Sigmoid colon (tissue), 7 donors: ENCODE measurements at regions of chr2 and their contacts with region 1.

Region 1: DNA sequence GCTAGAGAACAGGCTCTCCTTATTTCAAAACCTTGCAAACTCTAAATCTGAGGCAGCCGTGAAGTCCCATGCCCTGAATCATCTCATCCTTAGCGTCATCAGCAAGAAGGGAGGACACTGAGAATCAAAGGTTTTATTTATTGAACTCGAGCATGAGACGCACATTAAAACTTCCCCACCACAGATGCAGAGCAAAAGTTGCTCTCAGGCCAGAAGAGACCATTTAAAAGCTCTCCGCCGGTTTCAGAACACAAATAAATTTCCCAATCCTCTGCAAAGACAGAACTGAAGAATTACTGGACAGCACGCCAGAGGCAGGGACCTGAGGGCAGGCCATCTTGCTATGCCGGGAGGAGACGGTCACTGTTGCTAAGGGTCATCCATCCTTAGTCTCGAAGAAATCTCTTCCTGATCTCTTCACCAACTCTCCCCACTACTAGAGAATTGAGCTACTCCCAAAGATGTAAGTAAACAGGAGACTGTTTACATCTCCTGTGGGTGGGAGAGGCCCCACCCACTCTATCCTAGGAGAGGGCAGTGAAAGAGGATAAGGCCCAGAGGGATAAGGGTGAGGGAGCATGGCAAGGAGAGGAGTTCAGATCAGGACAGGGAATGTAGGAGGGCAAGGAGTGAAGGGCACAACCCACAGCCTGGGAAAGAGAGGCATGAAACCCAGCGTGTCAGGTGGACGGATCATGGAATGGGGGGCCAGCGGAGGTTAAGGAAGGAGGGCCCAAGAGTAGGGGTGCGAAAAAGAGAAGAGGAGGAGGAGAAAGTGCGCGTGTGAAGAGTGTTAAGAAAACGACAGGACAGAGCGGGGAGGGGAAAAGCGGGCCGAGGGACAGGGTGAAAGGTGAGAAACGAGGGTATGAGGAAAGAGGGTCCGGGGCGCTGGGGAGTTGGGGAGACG is 1.1 kb downstream of the AMMECR1L start:
- DNase-seq: no peak
- H3K4me3 ChIP-seq: peak overlapping the region; percentile 44 to 63 (median 60)
- H3K27ac ChIP-seq: peak overlapping the region; percentile 87 to 92 (median 90)
- H3K4me1 ChIP-seq: peaks cover 0 to 69% (median 46%) of the 10 kb centered on the region in 4 donors
- H3K27me3 ChIP-seq: no peaks in the 10 kb centered on the region
- CTCF ChIP-seq: no peak
- EP300 ChIP-seq: no peak
- POLR2A ChIP-seq: no peak

Region 2: DNA sequence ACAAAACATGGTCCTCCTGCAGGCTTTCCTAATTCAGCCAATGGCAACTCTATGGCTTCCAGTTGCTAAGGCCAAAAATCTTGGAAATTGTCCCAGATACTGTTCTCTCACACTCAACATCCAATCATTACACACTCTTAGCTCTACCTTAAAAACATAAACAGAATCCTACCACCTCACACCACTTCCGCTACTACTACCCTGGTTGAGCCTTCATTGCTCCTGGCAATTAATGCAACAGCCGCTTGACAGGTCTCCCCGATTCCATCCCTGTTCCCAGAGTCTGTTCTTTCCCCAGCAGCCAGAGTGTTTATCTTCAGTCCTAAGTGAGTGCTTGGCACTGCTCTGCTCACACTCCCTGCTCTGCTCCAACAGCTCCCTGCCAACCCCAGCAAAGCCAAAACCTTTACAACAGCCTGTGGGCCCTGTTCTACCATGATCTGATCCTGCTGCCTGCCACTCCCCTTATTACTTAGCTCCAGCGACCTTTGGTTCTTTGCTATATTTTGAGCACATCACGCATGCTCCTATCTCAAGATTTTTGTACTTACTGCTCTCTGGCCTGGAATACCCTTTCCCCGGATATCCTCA is 68.5 kb after region 1 on chr2:
- intact Hi-C with region 1: loop called (anchors 5 kb)
- DNase-seq: peak; percentile 83
- H3K4me3 ChIP-seq: no peak overlapping the region
- H3K27ac ChIP-seq: peak overlapping the region; percentile 60 to 75 (median 72)
- H3K4me1 ChIP-seq: peaks cover 4 to 32% (median 20%) of the 10 kb centered on the region in 4 donors
- H3K27me3 ChIP-seq: no peaks in the 10 kb centered on the region
- CTCF ChIP-seq: no peak
- EP300 ChIP-seq: no peak
- POLR2A ChIP-seq: no peak

Region 3: DNA sequence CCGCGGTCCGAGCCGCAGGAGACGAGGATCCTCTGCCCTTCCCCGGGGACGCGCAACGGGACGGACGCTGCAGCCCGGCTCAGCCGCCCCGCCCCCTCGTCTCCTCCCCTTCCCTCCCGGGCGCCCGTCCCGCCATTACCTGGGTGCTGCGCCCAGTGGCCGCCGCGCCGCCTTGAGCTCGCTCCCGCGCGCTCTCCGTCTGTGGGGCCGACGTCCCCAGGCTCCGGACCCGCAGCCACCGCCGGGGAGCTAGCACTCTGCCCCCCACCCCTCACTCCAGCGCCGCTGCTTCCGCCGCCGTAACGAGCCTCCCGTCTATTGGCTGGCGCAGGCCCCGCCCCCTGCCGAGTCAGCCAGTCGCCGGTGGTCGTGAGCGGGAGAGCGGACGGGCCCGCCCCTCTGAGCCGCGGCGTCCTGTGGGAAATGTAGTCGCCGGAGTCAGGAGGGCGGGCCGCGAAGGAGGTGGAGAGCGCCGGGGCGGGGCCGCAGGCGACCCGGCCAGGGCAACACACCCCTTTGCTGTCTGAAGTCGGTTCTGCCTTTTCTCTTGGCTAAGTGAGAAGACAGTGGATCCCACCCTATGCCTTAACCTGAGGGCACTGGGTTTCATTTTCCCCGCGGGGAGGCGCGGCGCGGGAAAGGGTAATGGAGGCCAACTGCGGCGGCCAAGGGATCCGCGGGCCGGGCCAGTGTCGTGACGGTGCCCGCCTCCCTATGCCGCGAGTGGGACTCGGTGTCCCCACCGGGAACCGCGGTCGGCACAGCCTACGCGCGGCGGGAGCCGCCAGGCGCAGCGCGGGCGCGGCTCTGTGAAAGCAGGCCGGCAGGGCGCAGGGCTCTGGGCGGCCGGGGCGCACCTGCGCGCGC is 143.3 kb after region 1 on chr2 and contains the start of gene SAP130:
- intact Hi-C with region 1: loop called (anchors 5 kb)
- DNase-seq: peak; percentile 99
- H3K4me3 ChIP-seq: peak within 1 kb of the TSS; percentile 93 to 100 (median 96)
- H3K27ac ChIP-seq: peak within 1 kb of the TSS; percentile 96 to 100 (median 99)
- H3K4me1 ChIP-seq: peaks cover 0 to 20% (median 19%) of the 10 kb centered on the region in 4 donors
- H3K27me3 ChIP-seq: no peaks in the 10 kb centered on the region
- CTCF ChIP-seq: no peak
- EP300 ChIP-seq: no peak
- POLR2A ChIP-seq: peak; percentile 59 to 72
- total RNA-seq, gene SAP130: 5.8 to 9.4 (median 6.9) TPM

Region 4: DNA sequence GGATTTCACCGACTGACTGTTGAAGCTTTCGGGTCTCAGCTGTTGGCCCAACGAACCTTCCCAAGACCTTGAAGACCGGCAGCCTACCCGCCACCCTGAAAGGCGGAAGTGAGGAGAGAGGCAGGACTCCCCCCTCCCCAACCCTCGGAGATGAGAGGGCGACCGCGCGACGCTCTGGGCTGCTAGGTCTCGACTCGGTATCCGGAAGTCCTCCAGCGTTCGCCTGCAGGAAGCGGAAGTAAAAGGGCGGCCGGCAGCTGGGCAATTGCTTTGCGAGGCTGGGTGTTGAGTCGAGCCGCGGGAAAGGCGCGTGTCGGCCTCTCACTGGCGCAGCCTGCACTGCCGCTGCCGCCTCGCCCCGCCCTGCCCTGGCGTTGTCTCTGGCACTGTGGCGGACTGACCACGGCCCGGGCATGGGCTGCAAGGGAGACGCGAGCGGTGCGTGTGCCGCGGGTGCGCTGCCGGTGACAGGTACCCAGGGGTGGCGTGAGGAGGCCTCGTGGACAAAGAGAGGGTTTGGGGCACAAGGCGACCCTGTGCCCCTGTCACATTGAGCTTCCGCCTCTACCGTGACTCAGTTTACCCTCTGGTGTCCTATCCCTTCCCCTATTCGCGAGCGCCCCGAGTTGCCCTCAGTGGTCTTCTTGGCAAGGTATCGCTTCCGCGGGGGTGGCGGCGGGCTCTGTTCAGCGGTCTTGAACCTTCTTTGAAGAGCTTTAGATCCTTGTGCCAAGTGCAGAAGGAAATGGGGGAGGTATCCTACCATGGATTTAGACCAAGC is 206.4 kb after region 1 on chr2 and contains the start of gene UGGT1:
- intact Hi-C with region 1: loop called (anchors 2 kb)
- DNase-seq: peak; percentile 96
- H3K4me3 ChIP-seq: peak within 1 kb of the TSS; percentile 83 to 98 (median 96)
- H3K27ac ChIP-seq: peak within 1 kb of the TSS; percentile 86 to 93 (median 87)
- H3K4me1 ChIP-seq: peaks cover 0 to 32% (median 16%) of the 10 kb centered on the region in 4 donors
- H3K27me3 ChIP-seq: no peaks in the 10 kb centered on the region
- CTCF ChIP-seq: no peak
- EP300 ChIP-seq: peak in 1 of 4 donors; percentile 7
- POLR2A ChIP-seq: peak; percentile 90 to 94
- total RNA-seq, gene UGGT1: 19.8 to 47.9 (median 28.2) TPM